Caco-2 (cell line): ENCODE measurements at regions of chr7 and their contacts with region 1.

Region 1: DNA sequence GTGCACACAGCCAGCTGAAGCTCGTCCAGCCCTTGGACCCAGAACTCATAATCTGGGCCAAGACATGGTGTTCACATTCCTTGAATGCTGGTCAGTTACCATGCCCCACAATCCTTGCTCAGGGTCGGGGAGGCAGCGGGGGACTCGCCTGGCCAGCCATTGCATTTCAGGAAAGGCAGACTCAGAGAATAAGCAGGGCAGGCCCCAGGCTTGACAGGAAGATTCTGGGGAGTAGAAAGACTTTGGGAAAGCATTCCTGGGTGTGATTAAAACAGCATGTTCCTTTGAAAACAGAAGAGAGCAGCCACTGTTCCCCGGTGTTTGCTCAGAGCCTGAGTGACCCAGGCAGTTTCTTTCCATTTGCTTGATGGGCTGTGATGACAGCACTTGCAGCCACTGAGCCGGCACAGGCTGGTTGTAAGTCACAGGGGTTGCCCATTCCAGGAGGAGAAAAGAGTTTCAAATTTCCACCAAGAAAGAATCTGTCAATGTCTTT is 473.7 kb downstream of the TYW1 start:
- DNase-seq: no peak
- H3K4me3 ChIP-seq: no peak overlapping the region
- H3K4me3 Mint-ChIP-seq: no peak overlapping the region
- H3K27ac Mint-ChIP-seq: no peak overlapping the region
- H3K4me1 ChIP-seq: no peaks in the 10 kb centered on the region
- H3K4me1 Mint-ChIP-seq: no peaks in the 10 kb centered on the region
- H3K27me3 ChIP-seq: no peaks in the 10 kb centered on the region
- H3K27me3 Mint-ChIP-seq: peaks cover 4% of the 10 kb centered on the region
- CTCF ChIP-seq: no peak

Region 2: GRCh38 chr7:66443946-66444345 is 1026.4 kb before region 1 on chr7:
- CTCF ChIA-PET with region 1: no interaction called
- POLR2A ChIA-PET with region 1: interaction called, 10 read pairs
- intact Hi-C with region 1: no loop called
- DNase-seq: no peak
- H3K4me3 ChIP-seq: no peak overlapping the region
- H3K4me3 Mint-ChIP-seq: no peak overlapping the region
- H3K27ac Mint-ChIP-seq: no peak overlapping the region
- H3K4me1 ChIP-seq: peaks cover 15% of the 10 kb centered on the region
- H3K4me1 Mint-ChIP-seq: peaks cover 11% of the 10 kb centered on the region
- H3K27me3 ChIP-seq: no peaks in the 10 kb centered on the region
- H3K27me3 Mint-ChIP-seq: no peaks in the 10 kb centered on the region
- CTCF ChIP-seq: no peak